Panc1 (cell line): ENCODE measurements at regions of chr15 and their contacts with region 1.

Region 1: DNA sequence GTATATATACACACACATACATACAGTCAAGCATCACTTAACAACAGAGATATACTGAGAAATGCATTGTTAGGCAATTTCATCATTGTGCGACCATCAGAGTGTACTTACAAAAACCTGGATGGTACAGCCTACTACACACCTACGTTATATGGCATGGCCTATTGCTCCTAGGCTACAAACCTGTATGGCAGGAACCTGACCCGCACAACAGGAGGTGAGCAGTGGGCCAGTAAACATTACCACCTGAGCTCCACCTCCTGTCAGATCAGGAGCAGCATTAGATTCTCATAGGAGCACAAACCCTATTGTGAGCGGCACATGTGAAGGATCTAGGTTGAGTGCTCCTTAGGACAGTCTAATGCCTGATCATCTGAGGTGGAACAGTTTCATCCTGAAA is 89.7 kb downstream of the SCAPER start:
- DNase-seq: no peak
- ATAC-seq: no peak
- H3K4me3 ChIP-seq: no peak overlapping the region
- H3K27ac ChIP-seq: no peak overlapping the region
- H3K4me1 ChIP-seq: no peaks in the 10 kb centered on the region
- H3K27me3 ChIP-seq: no peaks in the 10 kb centered on the region
- CTCF ChIP-seq: no peak

Region 2: DNA sequence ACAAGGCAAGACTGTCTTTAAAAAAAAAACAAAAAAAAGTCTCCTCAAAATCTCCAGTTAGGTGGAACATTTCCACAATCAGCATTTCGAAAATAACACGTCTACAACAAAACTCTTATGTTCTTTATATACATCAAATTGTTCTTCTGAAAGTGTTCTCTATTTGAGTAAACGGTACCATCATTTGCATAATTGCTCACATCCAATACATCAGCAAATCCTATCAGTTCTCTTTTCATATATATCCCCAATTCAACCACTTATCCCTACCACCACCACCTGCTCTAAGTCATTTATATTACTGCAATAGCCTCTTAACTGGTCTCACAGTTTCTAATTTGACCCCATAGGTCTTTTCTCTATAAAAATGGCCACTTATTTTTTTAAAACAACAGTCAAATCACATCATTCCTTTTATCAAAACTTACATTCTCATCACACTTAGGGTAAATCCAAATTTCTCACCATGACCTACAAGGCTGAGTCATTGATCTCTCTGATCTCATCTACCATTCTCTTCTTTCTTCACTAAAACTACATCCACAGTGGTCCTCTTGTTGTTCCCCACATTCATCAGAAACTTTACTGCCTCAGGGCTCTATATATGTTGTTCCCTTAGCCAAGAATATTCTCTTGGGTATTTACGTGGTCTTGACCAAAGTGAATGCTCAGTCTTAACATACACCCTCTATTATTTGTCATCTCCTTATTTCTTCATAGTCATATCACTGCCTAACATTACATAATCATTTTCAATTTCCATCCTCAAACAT is 147.3 kb before region 1 on chr15:
- CTCF ChIA-PET with region 1: no interaction called
- POLR2A ChIA-PET with region 1: no interaction called
- in situ Hi-C with region 1: no loop called
- intact Hi-C with region 1: loop called (anchors 10 kb)
- DNase-seq: no peak
- ATAC-seq: no peak
- H3K4me3 ChIP-seq: no peak overlapping the region
- H3K27ac ChIP-seq: no peak overlapping the region
- H3K4me1 ChIP-seq: no peaks in the 10 kb centered on the region
- H3K27me3 ChIP-seq: no peaks in the 10 kb centered on the region
- CTCF ChIP-seq: no peak

Region 3: GRCh38 chr15:76866716-76867321 is 51.4 kb after region 1 on chr15:
- CTCF ChIA-PET with region 1: interaction called, 12 read pairs
- POLR2A ChIA-PET with region 1: no interaction called
- in situ Hi-C with region 1: no loop called
- intact Hi-C with region 1: no loop called
- DNase-seq: peak; percentile 5
- ATAC-seq: no peak
- H3K4me3 ChIP-seq: no peak overlapping the region
- H3K27ac ChIP-seq: no peak overlapping the region
- H3K4me1 ChIP-seq: no peaks in the 10 kb centered on the region
- H3K27me3 ChIP-seq: no peaks in the 10 kb centered on the region
- CTCF ChIP-seq: peak; percentile 51; the same call in 1 of the 2 replicates